ENCODE measurements at regions of chrX and their contacts with region 1.

Region 1: DNA sequence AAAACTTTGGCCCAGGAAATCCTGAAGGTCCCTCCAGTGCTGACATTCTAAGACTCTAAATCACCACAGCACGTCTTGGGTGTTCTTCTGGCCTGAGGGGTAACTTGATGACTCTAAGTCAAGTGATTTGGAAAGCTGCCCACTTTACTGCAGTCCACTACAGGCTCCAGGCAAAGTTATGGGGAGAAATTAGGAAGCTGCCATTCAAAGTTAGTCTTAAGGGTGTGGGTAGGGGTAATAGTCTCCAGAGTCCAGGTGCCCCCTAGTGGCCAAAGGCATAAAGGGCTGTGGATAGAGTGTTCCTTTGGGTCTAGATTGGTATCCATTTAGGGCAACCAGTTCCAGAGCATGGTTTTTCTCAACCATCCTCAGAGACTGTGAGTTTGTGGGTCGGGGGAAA is 38.7 kb upstream of the SLC16A2 start:
- DNase-seq: peak; percentile 73
- H3K4me3 Mint-ChIP-seq: no peak overlapping the region
- H3K27ac Mint-ChIP-seq: no peak overlapping the region
- H3K4me1 Mint-ChIP-seq: no peaks in the 10 kb centered on the region
- H3K27me3 Mint-ChIP-seq: no peaks in the 10 kb centered on the region

Region 2: DNA sequence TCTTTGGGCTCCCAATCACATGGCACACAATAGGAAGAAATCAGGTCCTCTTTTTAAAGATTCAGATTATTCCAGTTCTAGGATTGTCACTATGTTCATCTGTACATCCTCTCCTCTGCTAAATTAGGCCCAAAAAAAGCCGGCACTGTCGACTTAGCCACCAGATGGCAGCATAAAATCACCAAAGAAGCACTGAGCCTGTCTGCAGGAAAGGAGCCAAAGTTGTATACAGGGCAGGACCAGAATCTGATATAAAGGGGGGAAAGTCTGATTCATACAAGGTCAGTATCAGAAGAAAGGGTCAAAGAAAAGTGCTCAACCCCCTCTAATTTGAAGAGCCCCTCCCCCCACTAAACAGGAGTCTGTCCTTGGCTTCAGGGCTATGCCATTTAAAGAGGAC is 527.1 kb before region 1 on chrX:
- CTCF ChIA-PET with region 1: interaction called, 3 read pairs
- intact Hi-C with region 1: loop called (anchors 2 kb)
- DNase-seq: peak; percentile 69
- H3K4me3 Mint-ChIP-seq: no peak overlapping the region
- H3K27ac Mint-ChIP-seq: no peak overlapping the region
- H3K4me1 Mint-ChIP-seq: no peaks in the 10 kb centered on the region
- H3K27me3 Mint-ChIP-seq: no peaks in the 10 kb centered on the region

Region 3: DNA sequence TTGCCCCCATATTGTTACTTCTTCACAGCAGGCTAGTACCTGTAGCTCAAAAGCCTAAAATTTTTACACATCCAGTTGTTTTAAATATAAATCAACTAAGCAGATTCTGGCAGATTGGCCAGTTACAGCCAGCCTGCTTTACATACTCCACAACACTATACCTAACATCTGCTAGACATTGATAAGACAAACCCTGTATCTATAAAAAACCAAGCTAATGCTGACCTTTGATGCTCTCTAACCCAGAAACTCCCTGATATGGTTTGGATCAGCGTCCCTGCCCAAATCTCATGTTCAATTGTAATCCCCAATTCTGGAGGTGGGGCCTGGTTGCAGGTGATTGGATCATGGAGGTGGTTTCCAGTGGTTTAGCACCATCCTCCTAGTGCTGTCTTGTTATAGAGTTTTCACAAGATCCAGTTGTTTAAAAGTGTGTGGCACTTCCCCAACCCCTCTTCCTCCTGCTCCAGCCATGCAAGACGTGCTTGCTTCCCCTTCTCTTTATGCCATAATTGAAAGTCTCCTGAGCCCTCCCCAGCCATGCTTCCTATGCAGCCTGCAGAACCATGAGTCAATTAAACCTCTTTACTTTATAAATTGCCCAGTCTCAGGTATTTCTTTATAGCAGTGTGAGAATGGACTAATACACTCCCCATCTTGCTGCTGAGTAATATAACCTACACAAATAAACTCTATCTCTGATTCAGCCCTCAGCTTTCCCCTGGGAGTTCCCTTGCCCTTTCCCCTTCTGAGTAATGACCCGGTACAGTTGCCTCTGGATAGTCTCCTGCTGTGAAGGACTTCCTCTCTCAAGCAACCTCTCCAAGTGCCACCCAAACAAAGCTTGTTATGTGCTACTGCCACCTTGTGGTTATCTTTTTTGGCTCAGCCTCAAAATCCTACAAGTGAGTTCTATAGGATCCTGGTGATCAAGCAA is 39.0 kb before region 1 on chrX:
- CTCF ChIA-PET with region 1: no interaction called
- intact Hi-C with region 1: loop called (anchors 2 kb)
- DNase-seq: peak; percentile 53
- H3K4me3 Mint-ChIP-seq: no peak overlapping the region
- H3K27ac Mint-ChIP-seq: no peak overlapping the region
- H3K4me1 Mint-ChIP-seq: peaks cover 4% of the 10 kb centered on the region
- H3K27me3 Mint-ChIP-seq: no peaks in the 10 kb centered on the region

Region 4: GRCh38 chrX:74371425-74372222 is 11.0 kb before region 1 on chrX:
- CTCF ChIA-PET with region 1: interaction called, 12 read pairs
- intact Hi-C with region 1: no loop called
- DNase-seq: no peak
- H3K4me3 Mint-ChIP-seq: no peak overlapping the region
- H3K27ac Mint-ChIP-seq: no peak overlapping the region
- H3K4me1 Mint-ChIP-seq: no peaks in the 10 kb centered on the region
- H3K27me3 Mint-ChIP-seq: no peaks in the 10 kb centered on the region

Region 5: GRCh38 chrX:74431797-74432196 is 49.2 kb after region 1 on chrX:
- CTCF ChIA-PET with region 1: no interaction called
- intact Hi-C with region 1: no loop called
- DNase-seq: no peak
- H3K4me3 Mint-ChIP-seq: no peak overlapping the region
- H3K27ac Mint-ChIP-seq: no peak overlapping the region
- H3K4me1 Mint-ChIP-seq: no peaks in the 10 kb centered on the region
- H3K27me3 Mint-ChIP-seq: no peaks in the 10 kb centered on the region

Region 6: GRCh38 chrX:74458735-74459134 is 76.1 kb after region 1 on chrX:
- CTCF ChIA-PET with region 1: no interaction called
- intact Hi-C with region 1: loop called (anchors 1 kb)
- DNase-seq: no peak
- H3K4me3 Mint-ChIP-seq: no peak overlapping the region
- H3K27ac Mint-ChIP-seq: no peak overlapping the region
- H3K4me1 Mint-ChIP-seq: no peaks in the 10 kb centered on the region
- H3K27me3 Mint-ChIP-seq: no peaks in the 10 kb centered on the region

Region 7: DNA sequence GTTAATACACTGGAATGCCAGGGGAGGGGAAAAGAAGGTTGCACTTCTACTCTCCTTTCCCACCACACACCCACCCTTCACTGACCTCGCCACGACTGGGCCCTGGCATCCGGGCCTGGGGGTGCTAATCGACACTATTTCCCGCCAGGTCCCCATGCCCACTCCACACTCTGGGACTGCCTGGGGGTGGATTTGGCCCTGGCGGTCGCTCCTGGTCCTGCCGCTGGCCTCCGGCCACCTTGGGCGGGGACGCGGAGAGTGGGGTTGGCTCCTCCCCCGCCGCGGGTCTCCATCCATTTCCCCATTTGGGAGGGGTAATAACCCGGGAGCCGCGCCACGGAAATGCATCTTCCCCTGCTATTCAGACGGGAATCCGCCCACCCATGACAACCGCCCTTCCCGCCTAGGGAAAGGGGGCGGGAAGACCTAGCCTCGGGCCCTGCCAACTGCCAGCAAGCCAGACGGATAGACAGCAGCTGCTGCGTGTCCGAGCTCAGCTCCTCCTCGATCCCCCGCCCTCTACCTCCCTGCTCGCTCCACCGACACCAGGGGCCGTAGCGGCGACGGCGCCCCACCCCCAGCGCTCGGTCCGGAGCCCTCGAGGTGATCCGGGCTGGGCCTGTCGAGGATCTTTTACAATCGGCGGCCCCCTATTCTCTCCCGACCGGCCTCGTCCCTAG is 153.7 kb after region 1 on chrX:
- CTCF ChIA-PET with region 1: interaction called, 4 read pairs
- intact Hi-C with region 1: loop called (anchors 1 kb)
- DNase-seq: peak; percentile 40
- H3K4me3 Mint-ChIP-seq: peak overlapping the region; percentile 73
- H3K27ac Mint-ChIP-seq: peak overlapping the region; percentile 2
- H3K4me1 Mint-ChIP-seq: peaks cover 20% of the 10 kb centered on the region
- H3K27me3 Mint-ChIP-seq: no peaks in the 10 kb centered on the region